IMR-90 (cell line): ENCODE measurements at regions of chr13 and their contacts with region 1.

Region 1: GRCh38 chr13:93233997-93234416 is 7.4 kb downstream of the GPC6 start:
- DNase-seq: no peak
- ATAC-seq: no peak
- H3K4me3 ChIP-seq: no peak overlapping the region
- H3K27ac ChIP-seq: no peak overlapping the region
- H3K4me1 ChIP-seq: peaks cover 5% of the 10 kb centered on the region
- H3K27me3 ChIP-seq: no peaks in the 10 kb centered on the region
- CTCF ChIP-seq: no peak
- POLR2A ChIP-seq: no peak
- RAD21 ChIP-seq: no peak

Region 2: GRCh38 chr13:92941167-92941566 is 292.8 kb before region 1 on chr13:
- CTCF ChIA-PET with region 1: no interaction called
- POLR2A ChIA-PET with region 1: no interaction called
- dilution Hi-C with region 1: no loop called
- in situ Hi-C with region 1: no loop called
- intact Hi-C with region 1: no loop called
- DNase-seq: no peak
- ATAC-seq: no peak
- H3K4me3 ChIP-seq: no peak overlapping the region
- H3K27ac ChIP-seq: no peak overlapping the region
- H3K4me1 ChIP-seq: no peaks in the 10 kb centered on the region
- H3K27me3 ChIP-seq: no peaks in the 10 kb centered on the region
- CTCF ChIP-seq: no peak
- POLR2A ChIP-seq: no peak
- RAD21 ChIP-seq: no peak

Region 3: GRCh38 chr13:93861818-93862217 is 627.8 kb after region 1 on chr13:
- CTCF ChIA-PET with region 1: no interaction called
- POLR2A ChIA-PET with region 1: no interaction called
- dilution Hi-C with region 1: no loop called
- in situ Hi-C with region 1: loop called (anchors 10 kb)
- intact Hi-C with region 1: loop called (anchors 5 kb)
- DNase-seq: peak; percentile 92
- ATAC-seq: peak; percentile 94
- H3K4me3 ChIP-seq: no peak overlapping the region; the same call in 1 of the 2 replicates
- H3K27ac ChIP-seq: peak overlapping the region; percentile 43; the same call in 1 of the 2 replicates
- H3K4me1 ChIP-seq: peaks cover 8% of the 10 kb centered on the region; the same call in 1 of the 2 replicates
- H3K27me3 ChIP-seq: no peaks in the 10 kb centered on the region
- CTCF ChIP-seq: no peak
- POLR2A ChIP-seq: no peak
- RAD21 ChIP-seq: no peak